ENCODE measurements at regions of chr2 and their contacts with region 1.

Region 1: DNA sequence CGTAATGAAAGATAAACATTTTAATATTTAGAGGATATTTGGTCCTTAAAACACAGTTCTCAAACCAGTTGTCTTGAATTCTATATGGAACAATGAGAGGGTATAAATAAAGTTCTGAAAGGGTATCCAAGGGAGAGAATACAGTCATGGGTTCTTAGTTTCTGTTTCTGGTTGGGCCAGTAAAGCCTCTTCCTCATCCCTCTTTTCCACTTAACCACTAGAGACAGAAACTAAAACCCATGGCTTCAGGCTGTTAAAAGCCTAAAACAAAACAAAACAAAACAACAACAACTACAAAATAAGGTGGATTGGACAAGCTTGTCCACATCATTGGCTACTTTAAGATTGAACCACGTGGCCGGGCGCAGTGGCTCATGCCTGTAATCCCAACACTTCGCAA is 18.8 kb downstream of the COQ10B start:
- DNase-seq: no peak
- ATAC-seq: no peak
- H3K4me3 Mint-ChIP-seq: no peak overlapping the region
- H3K27ac Mint-ChIP-seq: no peak overlapping the region
- H3K4me1 Mint-ChIP-seq: no peaks in the 10 kb centered on the region
- H3K27me3 Mint-ChIP-seq: no peaks in the 10 kb centered on the region
- CTCF ChIP-seq: no peak

Region 2: DNA sequence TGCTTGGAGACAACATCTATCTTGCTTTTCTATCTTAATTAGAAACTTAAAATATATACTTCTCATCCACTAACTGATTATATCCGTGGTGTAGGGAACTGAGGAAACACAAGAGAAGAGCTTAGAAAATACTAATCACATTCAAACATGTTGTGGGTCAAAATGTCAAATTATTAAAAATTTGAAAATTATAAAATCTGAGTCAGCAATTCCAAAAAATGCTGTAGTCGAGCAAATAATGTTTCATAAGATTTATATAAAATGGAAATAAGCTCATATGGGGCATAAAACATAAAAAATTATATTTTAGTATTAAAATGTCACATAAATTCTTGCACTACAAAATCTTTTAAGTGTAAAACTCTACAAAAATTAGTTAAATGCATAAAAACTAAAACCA is 66.6 kb before region 1 on chr2:
- CTCF ChIA-PET with region 1: no interaction called
- POLR2A ChIA-PET with region 1: no interaction called
- intact Hi-C with region 1: loop called (anchors 5 kb)
- DNase-seq: no peak
- ATAC-seq: no peak
- H3K4me3 Mint-ChIP-seq: no peak overlapping the region
- H3K27ac Mint-ChIP-seq: no peak overlapping the region
- H3K4me1 Mint-ChIP-seq: no peaks in the 10 kb centered on the region
- H3K27me3 Mint-ChIP-seq: no peaks in the 10 kb centered on the region
- CTCF ChIP-seq: no peak